Left colon (tissue), 2 donors: ENCODE measurements at regions of chr12 and their contacts with region 1.

Region 1: GRCh38 chr12:121793838-121794533 is 498 bp upstream of the RHOF start:
- DNase-seq: peak; percentile 93 to 95
- ATAC-seq: peak; percentile 50

Region 2: DNA sequence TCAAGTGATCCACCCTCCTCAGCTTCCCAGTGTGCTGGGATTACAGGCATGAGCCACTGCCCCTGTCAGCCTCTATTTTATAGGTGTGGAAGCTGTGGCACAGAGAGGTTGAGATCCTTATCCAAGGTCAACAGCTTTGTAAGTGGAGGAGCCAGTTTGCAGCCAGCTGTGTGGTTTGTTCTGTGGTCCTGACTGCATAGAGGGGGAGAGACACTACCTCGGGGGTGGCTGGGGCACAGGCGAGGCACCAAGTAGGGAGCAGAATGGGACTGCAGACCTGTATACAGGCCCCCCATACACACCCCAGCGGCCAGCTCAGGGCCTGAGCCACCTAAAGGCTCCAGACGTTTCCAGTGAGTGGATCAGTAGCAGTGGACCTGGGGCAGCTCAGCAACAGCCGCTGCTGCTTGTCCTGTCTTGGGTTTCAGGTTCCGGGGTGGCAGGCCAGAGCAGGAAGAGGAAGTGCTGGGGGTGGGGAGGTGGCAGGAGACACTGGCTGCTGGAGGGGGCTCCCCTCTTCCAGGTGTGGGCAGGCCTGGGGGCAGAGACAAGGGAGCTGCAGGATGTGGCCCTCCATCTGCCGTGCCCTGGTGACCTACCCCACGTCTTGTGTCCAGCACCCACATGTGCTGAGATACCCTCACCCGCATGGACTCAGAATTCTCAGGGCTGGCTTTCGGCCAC is 156.6 kb before region 1 on chr12:
- intact Hi-C with region 1: no loop called
- DNase-seq: peak; percentile 44 to 52
- ATAC-seq: peak; percentile 30

Region 3: DNA sequence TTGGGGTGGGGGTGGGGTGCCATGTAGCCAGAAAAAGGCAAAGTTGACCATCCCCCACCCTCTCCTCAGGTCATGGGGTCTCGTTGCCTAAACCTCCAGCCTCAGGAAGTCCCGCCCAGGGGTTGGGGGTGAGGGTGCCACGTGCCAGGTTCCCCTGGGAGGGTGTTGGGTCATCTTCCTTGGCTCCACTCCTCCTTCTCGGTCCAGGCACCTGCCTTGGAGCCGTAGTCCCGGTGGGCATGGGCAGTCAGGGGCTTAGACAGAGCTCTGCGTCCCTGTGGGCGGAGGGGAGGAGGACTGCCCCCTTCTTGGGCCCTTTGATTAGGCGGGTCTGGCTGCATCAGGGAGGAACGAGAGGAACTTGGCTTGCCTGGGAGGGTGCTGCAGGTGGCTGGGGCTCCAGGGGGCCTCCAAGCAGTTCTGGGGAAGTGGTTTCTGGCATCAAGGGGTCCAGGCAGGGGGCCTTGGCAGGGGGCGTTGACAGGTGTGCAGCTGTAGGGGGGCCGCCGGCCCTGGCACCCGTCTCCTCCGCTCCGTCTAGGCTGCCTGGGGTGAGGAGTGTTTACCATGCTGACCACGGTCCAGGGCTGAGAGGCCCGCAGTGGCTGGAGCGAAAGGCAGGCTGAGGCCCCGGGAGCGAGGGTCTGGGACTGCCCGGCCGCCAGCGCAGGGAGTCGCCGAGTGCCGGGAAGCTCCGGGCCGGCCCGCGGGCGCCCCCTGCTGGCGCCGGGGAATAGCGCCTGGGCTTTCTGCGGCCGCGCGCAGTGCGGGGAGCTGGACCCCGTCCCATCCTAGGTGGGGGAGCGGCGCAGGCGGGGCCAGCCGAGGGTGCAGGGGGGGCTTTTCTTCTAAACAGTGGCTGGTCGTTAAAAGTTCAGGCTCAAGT is 17.7 kb after region 1 on chr12:
- intact Hi-C with region 1: loop called in 1 of 2 experiments (anchors 2 kb)
- DNase-seq: peak; percentile 50 to 73
- ATAC-seq: peak; percentile 76

Region 4: DNA sequence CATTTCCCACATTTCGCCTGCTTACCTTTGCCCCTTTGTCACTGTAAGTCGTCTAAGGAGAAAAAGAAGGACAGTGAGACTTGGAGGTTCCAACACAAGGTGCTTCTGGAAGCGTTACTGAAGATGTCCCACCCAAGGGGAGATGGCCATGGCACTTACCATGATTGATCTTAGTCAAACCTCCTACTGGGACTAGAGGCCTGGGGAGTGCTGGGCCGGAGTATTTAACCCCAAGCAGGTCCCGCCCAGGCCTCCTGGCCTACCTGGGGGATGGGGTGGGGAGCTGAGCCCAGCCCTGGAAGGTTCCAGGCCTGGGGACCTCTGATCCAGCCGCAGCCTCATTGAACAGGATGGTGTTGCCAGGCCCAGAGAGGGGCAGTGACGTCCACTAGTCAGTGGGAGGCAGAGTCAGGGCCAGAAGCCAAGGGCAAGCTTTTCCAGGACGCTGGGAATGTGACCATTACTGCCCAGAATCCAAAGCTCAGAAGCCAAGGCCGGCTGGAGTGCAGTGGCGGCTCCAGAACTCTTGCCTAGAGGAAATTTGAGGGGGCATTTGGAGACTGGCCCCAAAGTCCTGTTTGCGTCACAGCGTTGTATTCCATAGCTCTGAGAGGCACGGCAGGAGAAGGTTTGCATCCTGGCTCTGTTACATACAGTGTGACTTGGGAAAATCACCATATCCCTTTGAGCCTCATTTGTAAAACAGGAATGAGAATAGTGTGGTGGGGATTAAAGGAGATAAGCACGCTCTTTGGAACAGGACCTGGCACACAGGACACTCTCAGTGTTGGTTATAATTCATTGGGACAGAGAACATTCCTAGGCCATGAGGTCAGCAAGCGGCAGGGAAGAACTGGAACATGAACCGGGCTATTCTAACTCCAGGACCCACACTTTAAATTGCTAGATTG is 64.9 kb after region 1 on chr12 and contains the start of gene HPD:
- intact Hi-C with region 1: no loop called
- DNase-seq: peak; percentile 33 to 47
- ATAC-seq: no peak
- total RNA-seq, gene HPD: 0.42 TPM in 1 of 2 donors, not detected in the other